Ovary (tissue), 10 donors: ENCODE measurements at regions of chr2 and their contacts with region 1.

Region 1: DNA sequence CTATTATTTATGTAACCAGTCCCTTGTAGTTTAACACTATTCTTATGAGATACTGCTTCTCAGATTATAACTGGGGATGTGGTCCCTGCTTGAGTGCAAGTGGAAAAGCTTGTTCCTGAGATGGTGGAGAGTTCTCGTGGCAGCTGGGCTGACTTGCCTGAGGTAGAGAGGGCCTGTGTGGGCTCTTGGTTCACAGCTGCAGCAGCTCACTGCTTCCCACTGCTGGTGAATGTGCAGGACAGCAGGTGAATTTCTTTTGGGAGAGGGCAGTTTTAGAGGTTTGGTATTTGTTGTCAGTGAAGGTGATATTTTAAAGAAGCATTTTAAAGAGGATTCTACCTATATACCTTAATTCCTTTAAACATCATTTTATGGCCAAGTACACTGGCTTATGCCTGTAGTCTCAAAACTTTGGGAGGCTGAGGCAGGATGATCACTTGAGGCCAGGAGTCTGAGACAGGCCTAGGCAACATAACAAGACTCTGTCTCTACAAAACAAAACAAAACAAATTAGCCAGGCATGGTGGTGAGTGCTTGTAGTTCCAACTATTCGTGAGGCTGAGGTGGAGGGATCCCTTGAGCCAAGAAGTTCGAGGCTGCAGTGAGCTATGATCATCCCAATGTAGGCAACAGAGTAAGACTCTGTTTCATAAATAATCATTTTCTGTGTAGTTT is 94.8 kb downstream of the MTA3 start:
- DNase-seq: peak; percentile 67 to 72 (median 69)
- H3K4me3 ChIP-seq: no peak overlapping the region
- H3K27ac ChIP-seq: no peak overlapping the region
- H3K4me1 ChIP-seq: no peaks in the 10 kb centered on the region
- H3K27me3 ChIP-seq: no peaks in the 10 kb centered on the region
- CTCF ChIP-seq: peak; percentile 87 to 96 (median 88)
- EP300 ChIP-seq: no peak
- POLR2A ChIP-seq: no peak

Region 2: GRCh38 chr2:42494355-42495233 is 168.6 kb before region 1 on chr2:
- intact Hi-C with region 1: loop called (anchors 1 to 10 kb)
- DNase-seq: peak; percentile 65 to 84 (median 79)
- H3K4me3 ChIP-seq: peak overlapping the region; percentile 40
- H3K27ac ChIP-seq: peak overlapping the region; percentile 77 to 92
- H3K4me1 ChIP-seq: peaks cover 1% of the 10 kb centered on the region
- H3K27me3 ChIP-seq: no peaks in the 10 kb centered on the region
- CTCF ChIP-seq: peak; percentile 68 to 87 (median 69)
- EP300 ChIP-seq: no peak
- POLR2A ChIP-seq: no peak

Region 3: DNA sequence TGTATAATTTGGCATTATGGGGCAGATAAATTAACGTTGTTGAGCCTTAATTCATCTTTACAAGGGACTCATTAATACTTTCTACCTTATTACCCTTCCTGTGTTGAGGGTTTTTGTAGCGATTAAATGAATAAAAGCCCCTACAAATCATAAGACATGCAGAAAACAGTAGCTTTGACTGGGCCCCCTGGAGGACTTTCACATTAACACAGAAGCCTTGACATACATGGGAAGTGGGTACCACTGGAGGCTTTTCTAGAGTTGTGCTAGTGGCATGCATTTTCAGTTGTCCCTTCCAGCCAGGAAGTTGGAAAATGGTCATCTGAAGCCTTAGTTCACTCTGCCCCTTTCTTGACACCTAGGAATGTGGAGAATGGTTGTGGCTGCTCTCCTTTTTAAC is 64.6 kb before region 1 on chr2:
- intact Hi-C with region 1: no loop called
- DNase-seq: no peak
- H3K4me3 ChIP-seq: no peak overlapping the region
- H3K27ac ChIP-seq: no peak overlapping the region
- H3K4me1 ChIP-seq: peaks cover 2% of the 10 kb centered on the region
- H3K27me3 ChIP-seq: no peaks in the 10 kb centered on the region
- CTCF ChIP-seq: no peak
- EP300 ChIP-seq: no peak
- POLR2A ChIP-seq: no peak

Region 4: GRCh38 chr2:42844901-42845821 is 181.9 kb after region 1 on chr2:
- intact Hi-C with region 1: no loop called
- DNase-seq: peak; percentile 61 to 79 (median 73)
- H3K4me3 ChIP-seq: no peak overlapping the region
- H3K27ac ChIP-seq: peak overlapping the region in 1 of 2 donors; percentile 75
- H3K4me1 ChIP-seq: peaks cover 24% of the 10 kb centered on the region
- H3K27me3 ChIP-seq: no peaks in the 10 kb centered on the region
- CTCF ChIP-seq: no peak
- EP300 ChIP-seq: no peak
- POLR2A ChIP-seq: no peak